Caco-2 (cell line): ENCODE measurements at regions of chr17 and their contacts with region 1.

Region 1: GRCh38 chr17:16915752-16916556 is 56.0 kb downstream of the TNFRSF13B start:
- DNase-seq: peak; percentile 61 to 68
- H3K4me3 ChIP-seq: no peak overlapping the region
- H3K4me3 Mint-ChIP-seq: no peak overlapping the region
- H3K27ac Mint-ChIP-seq: no peak overlapping the region
- H3K4me1 ChIP-seq: no peaks in the 10 kb centered on the region
- H3K4me1 Mint-ChIP-seq: peaks cover 9% of the 10 kb centered on the region
- H3K27me3 ChIP-seq: no peaks in the 10 kb centered on the region
- H3K27me3 Mint-ChIP-seq: no peaks in the 10 kb centered on the region
- CTCF ChIP-seq: peak; percentile 66 to 75

Region 2: DNA sequence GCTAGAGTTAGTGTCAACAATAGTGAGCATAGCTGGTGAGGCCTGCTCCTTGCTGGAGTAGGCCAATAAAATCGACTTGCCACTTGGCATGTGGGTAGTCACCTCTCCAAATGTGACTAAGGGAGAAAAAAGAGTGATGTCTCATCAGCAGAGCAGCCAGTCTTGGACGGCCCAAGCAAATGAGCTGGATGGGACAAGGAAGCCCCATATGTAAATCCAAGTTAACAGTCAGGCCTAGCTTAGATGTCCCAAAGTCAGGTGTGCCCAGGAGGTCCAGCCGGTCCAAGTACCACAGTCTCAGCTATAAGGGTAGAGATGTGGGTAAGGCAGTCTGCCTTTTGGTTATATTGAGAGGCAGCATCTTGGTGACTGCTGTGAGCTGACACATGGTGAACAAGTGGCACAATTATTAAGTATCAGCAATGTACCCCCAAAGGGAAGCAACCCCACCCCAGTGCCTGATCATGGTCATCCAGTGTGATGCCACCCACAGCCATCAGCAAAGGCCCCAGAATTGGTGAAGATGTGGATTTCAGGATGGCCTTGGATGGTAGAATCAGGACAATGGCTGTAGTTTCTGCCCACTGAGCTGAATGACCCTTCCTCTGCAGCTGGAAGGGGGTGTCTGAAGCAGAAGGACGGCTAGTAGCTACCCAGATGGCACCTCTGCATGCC is 27.4 kb before region 1 on chr17:
- CTCF ChIA-PET with region 1: no interaction called
- POLR2A ChIA-PET with region 1: no interaction called
- intact Hi-C with region 1: no loop called
- DNase-seq: no peak
- H3K4me3 ChIP-seq: no peak overlapping the region
- H3K4me3 Mint-ChIP-seq: no peak overlapping the region
- H3K27ac Mint-ChIP-seq: no peak overlapping the region
- H3K4me1 ChIP-seq: no peaks in the 10 kb centered on the region
- H3K4me1 Mint-ChIP-seq: no peaks in the 10 kb centered on the region
- H3K27me3 ChIP-seq: no peaks in the 10 kb centered on the region
- H3K27me3 Mint-ChIP-seq: peaks cover 6% of the 10 kb centered on the region
- CTCF ChIP-seq: no peak

Region 3: GRCh38 chr17:16905593-16906191 is 10.3 kb before region 1 on chr17:
- CTCF ChIA-PET with region 1: no interaction called
- POLR2A ChIA-PET with region 1: no interaction called
- intact Hi-C with region 1: loop called (anchors 1 kb)
- DNase-seq: no peak
- H3K4me3 ChIP-seq: no peak overlapping the region
- H3K4me3 Mint-ChIP-seq: no peak overlapping the region
- H3K27ac Mint-ChIP-seq: no peak overlapping the region
- H3K4me1 ChIP-seq: no peaks in the 10 kb centered on the region
- H3K4me1 Mint-ChIP-seq: no peaks in the 10 kb centered on the region
- H3K27me3 ChIP-seq: no peaks in the 10 kb centered on the region
- H3K27me3 Mint-ChIP-seq: peaks cover 20% of the 10 kb centered on the region
- CTCF ChIP-seq: no peak

Region 4: DNA sequence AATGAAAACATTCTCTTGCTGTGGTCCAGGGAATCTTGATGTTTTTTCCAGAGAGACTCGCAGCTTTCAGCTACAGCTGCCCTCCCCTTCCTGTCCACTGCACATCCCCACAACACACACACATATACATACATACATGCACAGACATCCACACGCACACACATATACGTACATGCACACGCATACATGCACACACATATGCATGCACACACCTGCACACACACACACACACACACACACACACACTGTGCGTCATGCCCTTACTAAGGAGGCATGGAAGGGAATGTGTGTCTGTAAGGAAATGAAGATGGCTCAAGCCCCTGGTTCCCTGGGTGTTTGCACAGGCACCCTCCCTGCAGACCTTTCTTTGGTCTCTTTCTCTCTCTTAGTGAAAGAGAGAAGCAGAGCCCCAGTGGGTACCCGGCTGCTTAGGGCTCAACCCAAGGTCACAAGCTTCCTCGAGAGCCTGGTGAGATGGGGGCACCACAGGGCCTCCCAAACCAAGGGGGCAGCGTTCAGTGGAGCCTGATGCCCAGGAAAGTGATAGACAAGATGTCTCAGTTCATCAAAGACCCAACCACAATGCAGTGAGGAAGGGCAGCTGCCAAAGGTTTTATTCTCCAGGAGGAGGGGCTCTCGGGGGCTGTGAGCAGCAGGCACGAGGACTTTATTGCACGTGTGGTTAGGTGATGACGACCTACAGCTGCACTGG is 22.7 kb after region 1 on chr17:
- CTCF ChIA-PET with region 1: no interaction called
- POLR2A ChIA-PET with region 1: no interaction called
- intact Hi-C with region 1: no loop called
- DNase-seq: peak in 1 of 2 experiments; percentile 21
- H3K4me3 ChIP-seq: no peak overlapping the region
- H3K4me3 Mint-ChIP-seq: no peak overlapping the region
- H3K27ac Mint-ChIP-seq: no peak overlapping the region
- H3K4me1 ChIP-seq: no peaks in the 10 kb centered on the region
- H3K4me1 Mint-ChIP-seq: no peaks in the 10 kb centered on the region
- H3K27me3 ChIP-seq: no peaks in the 10 kb centered on the region; the same call in 1 of the 2 replicates
- H3K27me3 Mint-ChIP-seq: peaks cover 7% of the 10 kb centered on the region
- CTCF ChIP-seq: no peak

Region 5: GRCh38 chr17:16991349-16992009 is 75.5 kb after region 1 on chr17:
- CTCF ChIA-PET with region 1: no interaction called
- POLR2A ChIA-PET with region 1: no interaction called
- intact Hi-C with region 1: loop called (anchors 5 kb)
- DNase-seq: peak; percentile 70 to 74
- H3K4me3 ChIP-seq: no peak overlapping the region
- H3K4me3 Mint-ChIP-seq: no peak overlapping the region
- H3K27ac Mint-ChIP-seq: no peak overlapping the region
- H3K4me1 ChIP-seq: no peaks in the 10 kb centered on the region
- H3K4me1 Mint-ChIP-seq: no peaks in the 10 kb centered on the region
- H3K27me3 ChIP-seq: no peaks in the 10 kb centered on the region
- H3K27me3 Mint-ChIP-seq: no peaks in the 10 kb centered on the region
- CTCF ChIP-seq: peak; percentile 69 to 75

Region 6: DNA sequence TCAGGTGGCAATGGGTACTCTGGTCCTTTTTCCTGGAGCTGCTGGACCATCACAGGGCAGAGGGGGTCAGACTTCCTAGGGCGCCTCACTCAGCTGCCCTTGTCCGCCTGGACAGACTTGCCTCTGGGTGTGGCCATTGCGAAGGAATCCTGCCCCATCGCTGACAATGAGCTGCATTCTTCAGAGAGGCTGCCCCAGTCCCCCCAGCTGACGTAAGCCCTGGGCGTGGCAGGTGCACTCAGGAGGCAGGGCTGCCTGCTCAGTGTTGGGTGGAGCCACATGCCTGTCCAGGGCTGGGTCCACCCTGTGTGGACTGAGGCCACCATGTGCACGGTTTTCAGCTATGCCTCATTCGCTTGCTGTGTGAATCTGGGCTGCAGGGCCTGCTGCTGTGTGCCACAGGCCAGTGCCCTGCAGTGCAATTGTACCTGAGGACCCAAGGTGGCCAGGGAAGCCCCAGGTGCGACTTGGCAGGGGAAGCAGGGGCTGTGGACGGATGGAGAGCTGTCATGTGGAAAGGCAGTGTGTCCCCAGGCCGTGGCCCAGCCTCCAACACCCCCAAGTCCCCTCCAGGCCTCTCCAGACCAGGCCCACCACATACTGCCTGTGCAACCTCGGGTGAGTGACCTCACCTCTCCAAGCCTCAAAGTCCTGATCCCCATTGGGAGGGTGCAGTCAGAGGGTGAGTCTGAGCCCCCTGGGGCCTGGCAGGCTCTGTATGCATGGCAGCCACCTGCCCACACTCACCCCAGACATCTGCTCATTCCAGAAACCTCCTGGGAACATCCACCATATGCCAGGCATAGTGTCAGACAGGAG is 112.3 kb after region 1 on chr17:
- CTCF ChIA-PET with region 1: no interaction called
- POLR2A ChIA-PET with region 1: no interaction called
- intact Hi-C with region 1: no loop called
- DNase-seq: peak; percentile 99 to 100
- H3K4me3 ChIP-seq: peak overlapping the region; percentile 24
- H3K4me3 Mint-ChIP-seq: peak overlapping the region; percentile 69
- H3K27ac Mint-ChIP-seq: peak overlapping the region; percentile 99
- H3K4me1 ChIP-seq: peaks cover 49% of the 10 kb centered on the region
- H3K4me1 Mint-ChIP-seq: peaks cover 53% of the 10 kb centered on the region
- H3K27me3 ChIP-seq: no peaks in the 10 kb centered on the region
- H3K27me3 Mint-ChIP-seq: no peaks in the 10 kb centered on the region
- CTCF ChIP-seq: peak in 1 of 2 experiments; percentile 46